ENCODE measurements at regions of chr19 and their contacts with region 1.

Region 1: GRCh38 chr19:1411255-1412191 is 4.1 kb downstream of the DAZAP1 start:
- DNase-seq: no peak
- H3K4me3 ChIP-seq: no peak overlapping the region
- H3K27ac ChIP-seq: peak overlapping the region; percentile 41
- H3K4me1 ChIP-seq: peaks cover 7 to 35% (median 30%) of the 10 kb centered on the region in 4 experiments
- H3K27me3 ChIP-seq: no peaks in the 10 kb centered on the region
- CTCF ChIP-seq: no peak
- EP300 ChIP-seq: no peak
- POLR2A ChIP-seq: no peak
- RAD21 ChIP-seq: no peak

Region 2: GRCh38 chr19:1396768-1397679 is 14.5 kb before region 1 on chr19:
- CTCF ChIA-PET with region 1: interaction called, 4 read pairs
- POLR2A ChIA-PET with region 1: interaction called, 15 read pairs
- DNase-seq: no peak
- H3K4me3 ChIP-seq: no peak overlapping the region
- H3K27ac ChIP-seq: no peak overlapping the region
- H3K4me1 ChIP-seq: peaks cover 0 to 10% (median 2%) of the 10 kb centered on the region in 4 experiments; a peak in 4 of 7 replicates
- H3K27me3 ChIP-seq: no peaks in the 10 kb centered on the region; a peak in 1 of 7 replicates
- CTCF ChIP-seq: no peak
- EP300 ChIP-seq: no peak
- POLR2A ChIP-seq: no peak
- RAD21 ChIP-seq: no peak

Region 3: DNA sequence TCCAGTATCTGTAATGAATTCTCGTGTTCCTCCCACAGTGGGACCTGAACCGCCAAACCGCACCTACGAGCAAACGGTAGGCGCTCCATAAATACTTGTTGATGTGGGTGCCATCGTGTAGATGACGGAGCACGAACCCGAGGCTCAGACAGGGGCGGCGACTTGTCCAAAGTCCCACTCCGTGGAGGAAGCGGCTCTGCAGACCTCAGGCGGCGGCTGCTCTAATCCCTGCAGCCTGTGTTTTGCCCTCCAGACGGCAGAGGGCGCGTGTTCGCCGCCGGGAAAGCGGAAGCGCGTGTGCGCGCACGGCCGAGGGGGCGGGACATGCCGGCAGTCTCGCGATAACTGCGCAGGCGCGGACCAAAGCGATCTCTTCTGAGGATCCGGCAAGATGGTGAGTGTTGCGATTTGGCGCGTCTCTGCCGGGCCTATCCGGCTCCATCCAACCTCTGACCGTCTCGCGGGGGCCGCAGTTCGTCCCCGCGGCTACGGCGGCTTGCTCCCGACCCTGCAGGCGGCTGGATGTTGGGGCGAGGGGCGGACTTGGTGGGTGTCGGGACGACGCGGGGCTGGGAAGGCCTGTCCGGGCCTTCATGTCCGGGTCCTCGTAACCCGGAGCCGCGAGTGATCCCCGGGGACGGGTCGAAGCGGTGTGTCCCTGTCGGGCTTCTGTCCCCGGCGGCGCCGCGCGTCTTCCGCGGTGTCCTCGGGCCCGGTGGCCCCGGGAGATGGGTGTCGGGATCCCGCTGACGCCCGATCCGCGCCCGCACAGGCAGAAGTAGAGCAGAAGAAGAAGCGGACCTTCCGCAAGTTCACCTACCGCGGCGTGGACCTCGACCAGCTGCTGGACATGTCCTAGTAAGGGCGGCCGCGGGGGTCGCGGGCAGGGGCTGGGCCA is 26.8 kb after region 1 on chr19 and contains the start of gene RPS15:
- CTCF ChIA-PET with region 1: interaction called, 4 read pairs
- POLR2A ChIA-PET with region 1: interaction called, 24 read pairs
- DNase-seq: peak; percentile 90 to 97
- H3K4me3 ChIP-seq: peak within 1 kb of the TSS; percentile 72 to 97 (median 90)
- H3K27ac ChIP-seq: peak within 1 kb of the TSS; percentile 96
- H3K4me1 ChIP-seq: peaks cover 0 to 5% (median 4%) of the 10 kb centered on the region in 4 experiments; a peak in 4 of 7 replicates
- H3K27me3 ChIP-seq: no peaks in the 10 kb centered on the region
- CTCF ChIP-seq: peak; percentile 91 to 97 (median 92)
- EP300 ChIP-seq: no peak
- POLR2A ChIP-seq: peak; percentile 97 to 98
- RAD21 ChIP-seq: peak; percentile 33 to 52; a peak in 3 of 4 replicates
- total RNA-seq, gene RPS15: 1,562 and 1,589 TPM in 2 replicates

Region 4: GRCh38 chr19:1478934-1479707 is 67.6 kb after region 1 on chr19 and contains the start of gene C19orf25:
- CTCF ChIA-PET with region 1: no interaction called
- POLR2A ChIA-PET with region 1: no interaction called
- DNase-seq: peak; percentile 80 to 92
- H3K4me3 ChIP-seq: peak within 1 kb of the TSS; percentile 65 to 86 (median 76)
- H3K27ac ChIP-seq: peak within 1 kb of the TSS; percentile 82; the same call in 1 of the 2 replicates
- H3K4me1 ChIP-seq: no peaks in the 10 kb centered on the region; a peak in 3 of 7 replicates
- H3K27me3 ChIP-seq: no peaks in the 10 kb centered on the region
- CTCF ChIP-seq: no peak
- EP300 ChIP-seq: no peak
- POLR2A ChIP-seq: peak in 1 of 2 experiments; percentile 62; a peak in 1 of 3 replicates
- RAD21 ChIP-seq: no peak
- total RNA-seq, gene C19orf25: 41.3 and 41.4 TPM in 2 replicates

Region 5: DNA sequence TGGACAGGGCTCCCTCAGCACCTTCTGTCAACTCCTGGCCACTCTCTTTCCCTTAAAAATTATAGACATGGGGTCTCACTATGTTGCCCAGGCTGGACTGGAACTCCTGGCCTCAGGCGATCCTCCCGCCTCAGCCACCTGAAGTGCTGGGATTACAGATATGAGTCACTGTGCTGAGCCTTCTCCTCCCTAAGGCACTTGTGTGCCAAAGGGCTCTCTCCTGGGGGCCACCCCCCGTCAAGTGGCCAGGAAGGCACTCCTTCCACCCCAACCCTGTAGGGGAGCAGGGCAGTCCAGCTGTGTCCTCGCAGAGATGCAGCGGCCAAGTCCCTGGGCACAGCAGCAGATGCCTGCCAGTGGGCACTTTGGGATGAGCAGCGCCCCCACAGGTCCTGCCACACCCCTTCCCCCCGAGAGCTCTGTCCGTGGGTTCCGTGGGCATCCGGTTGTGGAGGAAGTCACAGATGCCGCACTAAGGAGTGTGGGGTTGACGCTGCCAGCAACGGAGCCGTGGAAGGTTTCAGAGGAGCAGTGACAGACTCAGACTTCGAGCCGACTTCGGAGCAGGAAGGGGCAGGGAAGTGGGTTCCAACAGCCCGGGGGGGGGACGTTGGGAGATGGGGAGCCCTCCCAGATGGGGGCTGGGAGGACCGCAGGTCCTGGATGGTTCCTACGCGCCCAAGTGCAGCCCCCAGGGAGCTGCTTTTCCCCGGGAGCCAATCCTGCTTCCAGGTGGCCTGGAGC is 197.0 kb after region 1 on chr19:
- CTCF ChIA-PET with region 1: no interaction called
- POLR2A ChIA-PET with region 1: no interaction called
- DNase-seq: no peak
- H3K4me3 ChIP-seq: no peak overlapping the region
- H3K27ac ChIP-seq: no peak overlapping the region
- H3K4me1 ChIP-seq: peaks cover 0 to 7% (median 3%) of the 10 kb centered on the region in 4 experiments; a peak in 6 of 7 replicates
- H3K27me3 ChIP-seq: no peaks in the 10 kb centered on the region
- CTCF ChIP-seq: no peak
- EP300 ChIP-seq: no peak
- POLR2A ChIP-seq: 0 out of 3 replicates have a peak, but pooled peaks of 1 of the 2 experiments have one; percentile 37
- RAD21 ChIP-seq: no peak

Measured in H1 (cell line).